H1 (cell line): ENCODE measurements at regions of chr9 and their contacts with region 1.

Region 1: GRCh38 chr9:117411548-117411947 is 3.3 kb downstream of the ASTN2 start:
- DNase-seq: peak in 1 of 2 experiments; percentile 86
- H3K4me3 ChIP-seq: no peak overlapping the region
- H3K27ac ChIP-seq: no peak overlapping the region
- H3K4me1 ChIP-seq: peaks cover 13 to 17% (median 15%) of the 10 kb centered on the region in 4 experiments
- H3K27me3 ChIP-seq: peaks cover 12 to 38% (median 35%) of the 10 kb centered on the region in 4 experiments
- CTCF ChIP-seq: peak; percentile 97 to 99 (median 99)
- EP300 ChIP-seq: no peak
- POLR2A ChIP-seq: no peak
- RAD21 ChIP-seq: peak; percentile 94 to 98

Region 2: DNA sequence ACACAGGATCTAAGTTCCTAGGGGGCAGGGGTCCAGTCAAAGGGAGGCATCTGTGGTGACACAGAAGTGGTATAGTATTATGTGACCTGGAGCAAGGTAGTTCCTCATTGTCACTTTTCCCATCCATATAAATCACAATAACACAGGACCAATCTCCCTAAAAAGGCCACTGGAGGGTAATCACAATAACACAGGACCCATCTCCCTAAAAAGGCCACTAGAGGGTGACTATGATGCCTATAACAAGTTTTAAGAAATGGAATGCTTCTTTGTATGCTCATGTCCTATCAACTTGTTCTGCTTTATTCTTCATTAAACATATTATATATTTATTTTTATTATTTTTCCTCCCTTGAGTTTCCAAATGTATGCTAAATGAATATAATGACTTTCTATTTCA is 251.3 kb before region 1 on chr9:
- CTCF ChIA-PET with region 1: interaction called, 73 read pairs
- POLR2A ChIA-PET with region 1: no interaction called
- DNase-seq: no peak
- H3K4me3 ChIP-seq: no peak overlapping the region
- H3K27ac ChIP-seq: no peak overlapping the region
- H3K4me1 ChIP-seq: no peaks in the 10 kb centered on the region
- H3K27me3 ChIP-seq: no peaks in the 10 kb centered on the region
- CTCF ChIP-seq: peak in 2 of 3 experiments; percentile 39 to 60; a peak in 2 of 4 replicates
- EP300 ChIP-seq: no peak
- POLR2A ChIP-seq: no peak
- RAD21 ChIP-seq: peak; percentile 64 to 70

Region 3: DNA sequence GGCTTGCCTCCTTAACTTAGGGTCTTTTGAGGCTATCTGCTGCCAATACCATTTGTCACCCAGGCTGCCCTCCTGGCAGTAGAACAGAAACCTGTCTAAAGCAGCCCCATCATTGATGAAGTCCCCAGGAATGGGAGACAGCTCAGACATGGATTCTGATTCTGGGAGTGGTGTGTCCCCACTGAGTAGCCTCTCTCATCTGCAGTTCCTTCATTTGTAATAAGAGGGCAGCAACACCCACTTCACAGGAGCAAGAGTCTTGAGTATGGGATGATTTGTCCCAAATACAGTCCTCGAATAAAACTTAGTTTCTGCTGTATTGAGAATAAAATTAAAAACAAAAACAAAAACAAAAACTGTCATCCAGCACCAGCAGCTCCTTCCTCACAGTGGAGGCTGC is 164.3 kb before region 1 on chr9:
- CTCF ChIA-PET with region 1: interaction called, 19 read pairs
- POLR2A ChIA-PET with region 1: no interaction called
- DNase-seq: no peak
- H3K4me3 ChIP-seq: no peak overlapping the region
- H3K27ac ChIP-seq: no peak overlapping the region
- H3K4me1 ChIP-seq: no peaks in the 10 kb centered on the region
- H3K27me3 ChIP-seq: no peaks in the 10 kb centered on the region
- CTCF ChIP-seq: peak in 2 of 3 experiments; percentile 47 to 63; a peak in 3 of 4 replicates
- EP300 ChIP-seq: no peak
- POLR2A ChIP-seq: no peak
- RAD21 ChIP-seq: peak; percentile 63 to 74

Region 4: DNA sequence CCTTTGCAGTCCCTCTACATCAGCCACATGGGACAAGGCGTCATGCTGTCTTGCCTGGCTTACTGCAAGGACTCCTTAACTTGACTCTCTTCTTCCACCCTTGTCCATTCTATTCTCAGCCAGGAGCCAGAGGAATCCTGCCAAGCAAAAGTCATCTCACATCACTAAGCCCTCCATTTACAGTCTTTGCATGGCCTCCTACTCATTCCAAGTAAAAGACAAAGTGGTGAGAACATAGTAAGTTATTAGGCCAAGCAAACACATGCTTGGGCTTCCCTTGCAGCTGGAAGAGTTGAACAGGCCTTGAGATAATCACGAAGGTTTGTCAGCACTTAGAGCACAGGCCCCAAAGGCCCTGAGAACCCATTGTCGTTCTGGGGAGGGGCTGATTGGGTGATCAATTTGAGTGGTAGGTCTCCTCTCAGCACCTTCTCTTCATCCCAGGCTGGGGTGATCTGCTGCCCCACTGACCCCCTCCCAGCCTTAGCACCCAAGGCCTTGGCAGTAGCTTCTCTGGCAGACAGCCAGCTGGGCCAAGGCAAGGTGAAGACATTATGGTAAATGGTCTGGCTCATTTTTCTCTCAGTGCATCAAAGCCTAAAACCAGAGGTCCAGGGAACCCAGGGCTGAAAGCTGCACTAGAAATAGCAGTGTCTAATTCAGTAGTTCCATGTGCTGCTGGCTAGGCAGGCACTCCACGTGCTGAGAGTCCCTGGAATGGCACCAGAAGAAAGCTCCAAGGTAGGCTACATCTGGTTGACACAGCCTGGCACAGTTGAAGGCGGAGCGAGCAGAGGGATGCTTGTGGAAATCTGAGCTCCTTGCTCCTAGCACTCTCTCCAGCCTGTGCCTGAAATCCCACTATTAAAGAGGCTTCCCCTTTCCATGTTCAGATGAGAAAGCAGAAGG is 118.1 kb before region 1 on chr9:
- CTCF ChIA-PET with region 1: interaction called, 15 read pairs
- POLR2A ChIA-PET with region 1: no interaction called
- DNase-seq: no peak
- H3K4me3 ChIP-seq: no peak overlapping the region
- H3K27ac ChIP-seq: no peak overlapping the region
- H3K4me1 ChIP-seq: no peaks in the 10 kb centered on the region; a peak in 1 of 7 replicates
- H3K27me3 ChIP-seq: no peaks in the 10 kb centered on the region
- CTCF ChIP-seq: no peak
- EP300 ChIP-seq: no peak
- POLR2A ChIP-seq: no peak
- RAD21 ChIP-seq: no peak

Region 5: DNA sequence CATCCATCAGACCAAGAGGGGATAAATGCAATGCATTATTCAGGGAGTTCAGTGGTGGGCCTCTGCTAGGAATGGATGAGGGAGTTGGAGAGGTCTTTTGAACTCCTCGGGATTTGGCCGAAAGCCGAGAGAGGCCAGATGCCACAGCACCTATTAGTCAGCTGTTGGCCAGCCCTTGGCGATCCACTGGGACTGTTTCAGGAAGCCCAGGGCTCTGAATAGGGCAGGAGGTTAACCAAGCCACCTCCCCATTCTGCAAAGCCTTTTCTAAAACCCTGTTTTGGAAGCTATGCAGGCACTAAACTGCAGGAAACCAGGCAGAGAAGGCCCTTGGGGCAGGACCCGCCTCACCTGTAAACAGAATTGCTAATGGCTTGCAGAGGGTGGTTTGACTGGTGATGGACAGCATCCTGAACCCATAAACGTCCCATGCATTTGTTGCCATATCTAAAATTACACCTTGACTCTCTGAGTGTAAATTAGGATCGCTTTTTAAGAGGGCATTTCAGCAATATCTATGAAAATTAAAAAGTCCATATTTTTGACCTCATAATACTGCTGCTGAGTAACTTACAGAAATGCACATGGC is 34.4 kb before region 1 on chr9:
- CTCF ChIA-PET with region 1: interaction called, 42 read pairs
- POLR2A ChIA-PET with region 1: no interaction called
- DNase-seq: no peak
- H3K4me3 ChIP-seq: no peak overlapping the region
- H3K27ac ChIP-seq: no peak overlapping the region
- H3K4me1 ChIP-seq: peaks cover under 1 to 8% (median 6%) of the 10 kb centered on the region in 4 experiments; a peak in 3 of 7 replicates
- H3K27me3 ChIP-seq: no peaks in the 10 kb centered on the region
- CTCF ChIP-seq: no peak
- EP300 ChIP-seq: no peak
- POLR2A ChIP-seq: no peak
- RAD21 ChIP-seq: no peak

Region 6: GRCh38 chr9:117425566-117425965 is 14.0 kb after region 1 on chr9:
- CTCF ChIA-PET with region 1: interaction called, 13 read pairs
- POLR2A ChIA-PET with region 1: interaction called, 3 read pairs
- DNase-seq: no peak
- H3K4me3 ChIP-seq: no peak overlapping the region
- H3K27ac ChIP-seq: no peak overlapping the region
- H3K4me1 ChIP-seq: no peaks in the 10 kb centered on the region
- H3K27me3 ChIP-seq: no peaks in the 10 kb centered on the region
- CTCF ChIP-seq: peak in 2 of 3 experiments; percentile 33; a peak in 2 of 4 replicates
- EP300 ChIP-seq: no peak
- POLR2A ChIP-seq: no peak
- RAD21 ChIP-seq: peak; percentile 20 to 39; a peak in 1 of 4 replicates